ENCODE measurements at regions of chrX and their contacts with region 1.

Region 1: DNA sequence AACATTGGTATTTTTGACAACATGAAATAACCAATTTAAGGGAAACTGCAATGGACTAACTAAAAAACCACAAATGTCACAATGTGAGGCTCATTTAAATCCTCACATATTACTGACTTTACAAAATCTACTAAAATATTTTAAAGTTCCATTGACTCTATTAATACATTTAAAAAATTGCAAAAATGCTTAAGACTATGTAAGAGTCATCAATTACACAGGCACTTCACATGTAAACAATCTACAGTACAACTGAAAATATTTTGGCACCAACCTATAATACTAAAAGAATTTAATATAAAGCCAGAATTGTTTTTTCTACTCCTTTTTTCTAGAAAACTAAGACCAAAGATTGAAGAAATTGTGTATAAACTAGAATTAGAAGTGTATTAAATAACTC is 76.8 kb upstream of the RBMXL3 start:
- DNase-seq: no peak
- ATAC-seq: no peak
- H3K4me3 ChIP-seq: no peak overlapping the region
- H3K4me3 Mint-ChIP-seq: no peak overlapping the region
- H3K27ac ChIP-seq: no peak overlapping the region
- H3K27ac Mint-ChIP-seq: no peak overlapping the region
- H3K4me1 ChIP-seq: no peaks in the 10 kb centered on the region
- H3K4me1 Mint-ChIP-seq: no peaks in the 10 kb centered on the region
- H3K27me3 ChIP-seq: no peaks in the 10 kb centered on the region
- H3K27me3 Mint-ChIP-seq: no peaks in the 10 kb centered on the region
- CTCF ChIP-seq: no peak

Region 2: GRCh38 chrX:115147220-115147619 is 34.8 kb after region 1 on chrX:
- CTCF ChIA-PET with region 1: no interaction called
- POLR2A ChIA-PET with region 1: no interaction called
- intact Hi-C with region 1: loop called in 1 of 2 experiments (anchors 5 kb)
- DNase-seq: no peak
- ATAC-seq: no peak
- H3K4me3 ChIP-seq: no peak overlapping the region
- H3K4me3 Mint-ChIP-seq: no peak overlapping the region
- H3K27ac ChIP-seq: no peak overlapping the region
- H3K27ac Mint-ChIP-seq: no peak overlapping the region
- H3K4me1 ChIP-seq: no peaks in the 10 kb centered on the region
- H3K4me1 Mint-ChIP-seq: no peaks in the 10 kb centered on the region
- H3K27me3 ChIP-seq: no peaks in the 10 kb centered on the region
- H3K27me3 Mint-ChIP-seq: no peaks in the 10 kb centered on the region
- CTCF ChIP-seq: no peak

Region 3: GRCh38 chrX:115204040-115204439 is 91.6 kb after region 1 on chrX:
- CTCF ChIA-PET with region 1: no interaction called
- POLR2A ChIA-PET with region 1: no interaction called
- intact Hi-C with region 1: no loop called
- DNase-seq: no peak
- ATAC-seq: no peak
- H3K4me3 ChIP-seq: no peak overlapping the region
- H3K4me3 Mint-ChIP-seq: no peak overlapping the region
- H3K27ac ChIP-seq: no peak overlapping the region
- H3K27ac Mint-ChIP-seq: no peak overlapping the region
- H3K4me1 ChIP-seq: no peaks in the 10 kb centered on the region
- H3K4me1 Mint-ChIP-seq: no peaks in the 10 kb centered on the region
- H3K27me3 ChIP-seq: no peaks in the 10 kb centered on the region
- H3K27me3 Mint-ChIP-seq: no peaks in the 10 kb centered on the region
- CTCF ChIP-seq: no peak